ENCODE measurements at regions of chr1 and their contacts with region 1.

Region 1: GRCh38 chr1:33472349-33472980 is at the start of gene ZSCAN20:
- DNase-seq: peak; percentile 98
- ATAC-seq: peak; percentile 95
- total RNA-seq, gene ZSCAN20: 4.7 TPM

Region 2: DNA sequence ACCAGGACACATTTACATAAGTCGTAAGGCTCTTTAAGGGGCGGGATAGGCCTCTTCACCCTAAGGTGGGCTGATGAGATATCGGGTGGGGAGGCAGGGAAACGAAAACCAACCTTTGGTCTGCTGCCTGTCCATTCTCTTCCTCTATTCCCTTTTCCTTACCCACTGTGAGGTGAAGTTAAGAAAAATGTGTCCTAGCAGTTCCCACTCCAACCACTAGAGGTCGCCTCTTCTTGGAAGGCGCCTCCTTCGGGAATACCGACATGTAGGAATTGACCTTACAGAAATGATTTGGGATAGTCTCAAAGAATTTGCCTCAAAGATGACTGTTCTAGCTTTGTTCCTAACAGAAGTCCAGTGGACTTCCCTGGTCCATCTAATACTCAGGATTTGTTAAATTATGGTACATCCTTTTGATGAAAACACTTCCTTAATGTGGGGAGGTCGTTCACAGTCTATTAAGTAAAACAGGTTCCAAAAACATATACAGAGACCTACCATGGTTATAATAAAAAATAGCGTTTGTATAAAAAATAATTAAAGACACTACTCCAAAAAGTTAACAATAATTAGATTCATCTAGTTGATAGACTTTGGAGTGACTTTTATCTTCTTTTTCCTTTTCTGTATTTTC is 377.4 kb before region 1 on chr1:
- intact Hi-C with region 1: loop called (anchors 2 kb)
- DNase-seq: no peak
- ATAC-seq: peak; percentile 21

Region 3: DNA sequence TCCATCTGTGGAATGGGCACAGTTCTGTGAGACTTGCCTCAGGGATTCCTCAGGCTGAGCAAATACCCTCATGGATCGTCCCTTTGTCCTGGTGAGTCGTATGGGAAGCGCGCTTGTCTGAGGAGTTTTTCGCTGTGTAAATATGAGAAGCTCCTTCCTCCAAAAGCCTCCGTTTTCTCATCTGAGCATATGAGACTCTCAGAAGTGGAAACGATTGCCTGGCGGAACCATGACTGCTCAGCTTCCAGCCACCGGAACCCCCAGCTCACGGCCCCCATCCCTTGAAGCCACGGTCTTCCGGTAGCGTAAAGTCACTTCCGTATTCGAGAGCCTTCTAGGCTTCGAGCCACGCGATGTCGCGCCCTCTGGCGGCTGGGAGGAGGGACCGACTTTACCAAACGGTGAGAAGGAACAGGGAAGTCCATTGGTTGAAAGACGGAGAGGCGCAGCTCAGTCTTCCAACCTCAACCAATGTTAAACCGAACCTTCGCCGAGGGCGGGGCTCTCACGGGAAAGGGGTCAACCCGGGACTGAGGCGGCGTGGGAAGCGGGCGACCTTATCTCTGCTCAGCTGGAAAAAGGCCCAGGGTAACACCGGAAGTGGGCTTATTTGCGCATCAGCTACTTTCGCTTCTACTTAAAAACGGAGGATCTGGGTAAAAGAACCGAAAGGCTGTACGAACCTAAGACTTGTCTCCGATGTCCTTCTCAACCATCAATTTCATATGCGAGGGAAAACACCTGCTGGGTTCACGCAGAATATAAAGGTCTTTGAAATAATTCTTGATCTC is 345.3 kb before region 1 on chr1:
- intact Hi-C with region 1: loop called (anchors 5 kb)
- DNase-seq: peak; percentile 99
- ATAC-seq: peak; percentile 97

Region 4: DNA sequence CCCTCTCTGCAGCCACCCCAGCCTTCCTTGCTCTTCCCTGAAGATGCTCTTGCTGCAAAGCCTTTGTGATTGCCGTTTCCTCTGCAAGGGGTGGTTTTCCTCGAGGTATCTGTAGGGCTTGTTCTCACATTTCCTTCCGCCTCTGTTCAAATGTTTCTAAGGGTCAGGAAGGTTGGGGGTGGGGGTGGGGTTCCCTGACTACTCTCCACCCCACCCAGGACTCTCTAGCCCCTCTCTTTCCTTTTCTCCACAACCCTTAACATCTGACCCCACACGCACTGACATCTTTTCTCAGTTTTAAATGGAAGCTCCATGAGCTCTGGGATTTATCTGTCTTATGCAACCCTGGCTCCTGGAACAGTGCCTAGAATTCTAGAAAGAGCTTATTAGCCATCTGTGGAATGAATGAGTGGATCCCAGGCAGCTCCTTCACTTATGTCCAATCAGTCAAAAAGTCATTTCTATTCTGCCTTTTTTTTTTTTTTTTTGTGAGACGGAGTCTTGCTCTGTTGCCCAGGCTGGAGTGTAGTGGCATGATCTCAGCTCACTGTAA is 243.5 kb before region 1 on chr1:
- intact Hi-C with region 1: loop called (anchors 10 kb)
- DNase-seq: no peak
- ATAC-seq: peak; percentile 87

Region 5: GRCh38 chr1:33295450-33296081 is 176.9 kb before region 1 on chr1:
- intact Hi-C with region 1: loop called (anchors 1 kb)
- DNase-seq: peak; percentile 90
- ATAC-seq: peak; percentile 87

Region 6: GRCh38 chr1:33349778-33350610 is 122.5 kb before region 1 on chr1:
- intact Hi-C with region 1: no loop called
- DNase-seq: peak; percentile 95
- ATAC-seq: peak; percentile 91

Region 7: GRCh38 chr1:33575324-33575879 is 102.9 kb after region 1 on chr1:
- intact Hi-C with region 1: loop called (anchors 1 kb)
- DNase-seq: no peak
- ATAC-seq: peak; percentile 88

Region 8: GRCh38 chr1:33616773-33617172 is 144.3 kb after region 1 on chr1:
- intact Hi-C with region 1: loop called (anchors 2 kb)
- DNase-seq: no peak
- ATAC-seq: no peak